ENCODE measurements at regions of chr12 and their contacts with region 1.

Region 1: GRCh38 chr12:12432364-12432763 is 75.5 kb downstream of the BORCS5 start:
- DNase-seq: peak; percentile 68
- H3K4me3 ChIP-seq: no peak overlapping the region
- H3K27ac ChIP-seq: no peak overlapping the region
- H3K4me1 ChIP-seq: peaks cover 28% of the 10 kb centered on the region
- H3K27me3 ChIP-seq: no peaks in the 10 kb centered on the region
- CTCF ChIP-seq: no peak

Region 2: GRCh38 chr12:12032851-12033588 is 399.3 kb before region 1 on chr12:
- CTCF ChIA-PET with region 1: no interaction called
- dilution Hi-C with region 1: no loop called
- in situ Hi-C with region 1: no loop called
- intact Hi-C with region 1: no loop called
- DNase-seq: peak; percentile 72
- H3K4me3 ChIP-seq: peak overlapping the region; percentile 11 to 33 (median 26)
- H3K27ac ChIP-seq: no peak overlapping the region
- H3K4me1 ChIP-seq: no peaks in the 10 kb centered on the region
- H3K27me3 ChIP-seq: no peaks in the 10 kb centered on the region
- CTCF ChIP-seq: peak; percentile 79 to 90

Region 3: DNA sequence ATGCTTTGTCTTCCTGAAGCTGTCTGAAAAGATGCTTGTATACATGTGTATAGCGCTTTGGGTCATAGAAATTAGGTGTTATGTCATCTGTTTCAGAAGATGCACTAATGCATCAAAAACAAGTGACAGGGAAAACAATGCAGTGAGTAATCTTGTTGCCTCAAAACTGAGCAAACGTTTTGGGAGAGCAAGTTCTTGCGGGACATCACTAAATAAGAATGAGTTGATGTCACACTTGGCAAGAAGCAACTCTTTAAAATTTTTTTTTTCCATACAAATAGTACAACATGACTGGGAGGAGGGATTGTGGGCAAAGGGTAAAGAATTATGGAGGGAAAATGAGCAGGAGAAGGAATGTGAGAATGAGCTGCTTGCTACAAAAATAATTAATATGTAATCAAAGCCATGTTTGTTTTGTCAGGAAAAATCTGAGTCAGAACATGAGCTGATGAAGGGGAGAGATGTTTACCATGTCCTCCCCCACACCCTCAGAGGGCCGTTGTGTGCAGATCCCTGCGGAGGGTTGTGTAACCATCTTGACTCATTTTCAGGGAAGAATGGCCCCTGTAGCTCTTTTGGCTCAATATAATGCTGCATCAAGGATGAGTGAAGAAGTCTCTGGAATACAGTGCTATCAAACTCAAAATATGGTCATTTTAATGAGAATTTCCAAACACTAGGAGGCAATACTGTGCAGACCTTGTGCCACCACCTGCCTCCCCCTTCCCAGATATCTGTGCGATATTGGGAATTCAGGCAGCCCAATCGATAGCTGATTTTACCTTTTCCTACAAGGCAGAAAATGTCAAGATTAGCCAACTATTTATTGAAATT is 34.1 kb before region 1 on chr12:
- CTCF ChIA-PET with region 1: no interaction called
- dilution Hi-C with region 1: no loop called
- in situ Hi-C with region 1: no loop called
- intact Hi-C with region 1: loop called (anchors 2 kb)
- DNase-seq: peak; percentile 90
- H3K4me3 ChIP-seq: no peak overlapping the region
- H3K27ac ChIP-seq: peak overlapping the region; percentile 42
- H3K4me1 ChIP-seq: peaks cover 21% of the 10 kb centered on the region
- H3K27me3 ChIP-seq: no peaks in the 10 kb centered on the region
- CTCF ChIP-seq: peak in 1 of 2 donors; percentile 9

Region 4: DNA sequence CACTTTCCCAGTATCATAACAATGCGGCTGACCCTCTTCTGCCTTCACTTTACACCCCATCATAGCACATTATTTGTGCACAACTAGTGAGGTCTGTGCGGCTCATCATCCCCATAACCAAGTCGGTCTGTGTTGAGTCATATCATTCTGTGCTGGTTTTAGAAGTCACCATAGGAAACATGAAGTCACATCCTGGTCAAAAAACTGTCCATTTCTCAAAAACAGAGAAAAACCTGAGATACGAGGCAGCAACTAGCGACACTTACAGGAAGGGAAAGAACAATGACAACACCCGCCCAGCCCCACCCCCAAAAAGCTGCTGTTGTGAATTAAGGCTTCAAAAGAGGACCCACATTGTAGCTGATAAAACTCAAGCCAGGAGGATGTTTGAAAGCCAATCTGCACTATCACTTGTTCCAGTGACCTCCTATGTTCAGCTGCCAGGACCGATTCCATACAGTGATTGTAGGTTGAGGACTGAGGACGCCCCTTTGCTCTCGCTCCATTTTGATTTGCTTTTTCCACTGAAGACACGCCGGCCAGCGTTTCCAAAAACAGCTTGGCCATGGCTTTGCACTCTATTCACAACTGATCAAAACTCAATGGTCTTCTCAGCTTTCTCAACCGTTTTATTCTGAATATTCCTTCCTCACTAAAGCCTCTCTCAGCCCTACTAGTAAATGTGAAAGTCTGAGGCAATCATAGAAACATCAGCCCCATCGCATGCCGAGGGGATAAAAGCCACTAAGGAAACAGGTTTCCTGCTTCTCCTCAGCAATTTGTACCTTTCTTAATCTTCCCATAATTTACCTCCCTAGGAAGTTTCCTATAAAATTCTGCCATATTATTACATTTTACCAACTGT is 42.8 kb after region 1 on chr12:
- CTCF ChIA-PET with region 1: no interaction called
- dilution Hi-C with region 1: loop called (anchors 5 kb)
- in situ Hi-C with region 1: no loop called
- intact Hi-C with region 1: no loop called
- DNase-seq: no peak
- H3K4me3 ChIP-seq: no peak overlapping the region
- H3K27ac ChIP-seq: no peak overlapping the region
- H3K4me1 ChIP-seq: no peaks in the 10 kb centered on the region
- H3K27me3 ChIP-seq: no peaks in the 10 kb centered on the region
- CTCF ChIP-seq: no peak